Lower leg skin (tissue), 4 donors: ENCODE measurements at regions of chr16 and their contacts with region 1.

Region 1: DNA sequence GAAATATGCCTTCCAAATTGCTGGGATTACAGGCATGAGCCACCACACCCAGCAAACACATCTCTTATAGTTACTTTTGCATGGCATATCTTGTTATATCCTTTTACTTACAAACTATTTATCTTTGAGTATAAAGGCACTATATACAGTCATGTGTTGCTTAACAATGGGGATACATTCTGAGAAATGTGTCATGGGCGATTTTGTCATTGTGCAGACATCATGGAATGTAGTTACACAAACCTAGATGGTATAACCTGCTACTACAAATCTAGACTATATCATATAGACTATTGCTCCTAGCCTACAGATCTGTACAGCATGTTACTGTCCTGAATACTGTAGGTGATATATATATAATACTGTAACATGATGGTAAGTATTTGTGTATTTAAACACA is 43.6 kb downstream of the BCL7C start:
- DNase-seq: no peak
- H3K4me3 ChIP-seq: no peak overlapping the region
- CTCF ChIP-seq: no peak
- POLR2A ChIP-seq: no peak

Region 2: DNA sequence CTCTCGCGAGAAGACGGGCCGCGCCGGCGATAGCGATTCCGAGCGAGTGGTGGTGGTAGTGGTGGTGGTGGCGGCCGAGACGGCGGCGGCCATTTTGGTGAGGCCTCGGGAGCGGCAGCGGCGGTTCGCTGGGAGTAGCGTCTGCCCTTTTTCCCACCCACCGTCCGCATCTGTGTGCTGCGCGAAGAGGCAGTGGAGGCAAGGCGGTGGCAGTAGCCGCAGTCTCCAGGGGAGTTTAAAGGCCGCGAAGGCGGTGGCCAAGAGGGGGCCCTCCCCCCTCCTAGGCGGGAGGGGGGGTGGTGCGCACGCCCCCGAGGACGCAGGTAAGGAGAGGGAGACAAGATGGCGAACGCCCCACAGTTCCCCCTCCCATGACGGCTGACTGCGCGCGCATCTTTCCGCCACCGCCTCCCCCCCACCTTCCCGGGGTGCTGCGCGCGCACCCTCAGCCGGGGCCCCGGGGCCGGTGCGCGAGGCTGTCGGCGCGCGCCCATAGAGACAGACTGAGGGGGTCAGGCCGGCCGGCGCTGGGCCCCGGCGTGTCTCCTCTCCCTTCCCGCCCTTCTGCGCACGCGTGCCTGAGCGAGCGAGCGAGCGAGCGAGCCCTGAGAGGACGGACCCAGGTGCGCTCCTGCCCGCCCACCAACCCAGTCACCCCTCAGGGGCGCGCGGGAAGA is 152.0 kb before region 1 on chr16:
- intact Hi-C with region 1: no loop called
- DNase-seq: peak; percentile 98 to 100
- H3K4me3 ChIP-seq: peak overlapping the region; percentile 99
- CTCF ChIP-seq: peak in 1 of 3 donors; percentile 31
- POLR2A ChIP-seq: peak in 1 of 2 donors; percentile 42

Region 3: GRCh38 chr16:30884760-30885159 is 34.5 kb after region 1 on chr16:
- intact Hi-C with region 1: loop called (anchors 1 kb)
- DNase-seq: no peak
- H3K4me3 ChIP-seq: no peak overlapping the region
- CTCF ChIP-seq: no peak
- POLR2A ChIP-seq: no peak

Region 4: GRCh38 chr16:30957456-30958174 is 107.4 kb after region 1 on chr16 and contains the start of gene SETD1A:
- intact Hi-C with region 1: no loop called
- DNase-seq: peak; percentile 96 to 99
- H3K4me3 ChIP-seq: peak within 1 kb of the TSS; percentile 75
- CTCF ChIP-seq: no peak
- POLR2A ChIP-seq: no peak
- total RNA-seq, gene SETD1A: 9.2 to 22.4 (median 10.7) TPM